Naive thymus-derived CD4-positive, alpha-beta T cell (primary cell): ENCODE measurements at regions of chr20 and their contacts with region 1.

Region 1: GRCh38 chr20:1225783-1226654 is at the start of gene RAD21L1:
- DNase-seq: peak; percentile 55 to 83 (median 66)
- ATAC-seq: peak; percentile 96
- H3K4me3 ChIP-seq: peak within 1 kb of the TSS; percentile 76
- H3K4me3 Mint-ChIP-seq: peak within 1 kb of the TSS; percentile 82 to 92 (median 87)
- H3K27ac ChIP-seq: peak within 1 kb of the TSS; percentile 73
- H3K27ac Mint-ChIP-seq: peak within 1 kb of the TSS in 8 of 9 donors; percentile 34 to 90 (median 81)
- H3K4me1 ChIP-seq: peaks cover 8 to 12% of the 10 kb centered on the region in 2 donors
- H3K4me1 Mint-ChIP-seq: peaks cover 0 to 21% (median 14%) of the 10 kb centered on the region in 7 donors
- H3K27me3 ChIP-seq: peaks cover 0 to 11% of the 10 kb centered on the region in 2 donors
- H3K27me3 Mint-ChIP-seq: peaks cover 0 to 65% (median 16%) of the 10 kb centered on the region in 5 donors
- total RNA-seq, gene RAD21L1: 0.58 to 0.81 (median 0.64) TPM in 3 of 5 experiments, not detected in the others

Region 2: GRCh38 chr20:844473-845225 is 381.4 kb before region 1 on chr20:
- CTCF ChIA-PET with region 1: no interaction called
- POLR2A ChIA-PET with region 1: no interaction called
- intact Hi-C with region 1: loop called (anchors 2 to 5 kb)
- DNase-seq: peak; percentile 55 to 95 (median 83)
- ATAC-seq: peak; percentile 98
- H3K4me3 ChIP-seq: peak overlapping the region; percentile 75
- H3K4me3 Mint-ChIP-seq: peak overlapping the region; percentile 88 to 97 (median 94)
- H3K27ac ChIP-seq: peak overlapping the region; percentile 70
- H3K27ac Mint-ChIP-seq: peak overlapping the region in 8 of 9 donors; percentile 70 to 93 (median 86)
- H3K4me1 ChIP-seq: peaks cover 40 to 45% of the 10 kb centered on the region in 2 donors
- H3K4me1 Mint-ChIP-seq: peaks cover 30 to 58% (median 52%) of the 10 kb centered on the region in 7 donors
- H3K27me3 ChIP-seq: no peaks in the 10 kb centered on the region
- H3K27me3 Mint-ChIP-seq: no peaks in the 10 kb centered on the region

Region 3: DNA sequence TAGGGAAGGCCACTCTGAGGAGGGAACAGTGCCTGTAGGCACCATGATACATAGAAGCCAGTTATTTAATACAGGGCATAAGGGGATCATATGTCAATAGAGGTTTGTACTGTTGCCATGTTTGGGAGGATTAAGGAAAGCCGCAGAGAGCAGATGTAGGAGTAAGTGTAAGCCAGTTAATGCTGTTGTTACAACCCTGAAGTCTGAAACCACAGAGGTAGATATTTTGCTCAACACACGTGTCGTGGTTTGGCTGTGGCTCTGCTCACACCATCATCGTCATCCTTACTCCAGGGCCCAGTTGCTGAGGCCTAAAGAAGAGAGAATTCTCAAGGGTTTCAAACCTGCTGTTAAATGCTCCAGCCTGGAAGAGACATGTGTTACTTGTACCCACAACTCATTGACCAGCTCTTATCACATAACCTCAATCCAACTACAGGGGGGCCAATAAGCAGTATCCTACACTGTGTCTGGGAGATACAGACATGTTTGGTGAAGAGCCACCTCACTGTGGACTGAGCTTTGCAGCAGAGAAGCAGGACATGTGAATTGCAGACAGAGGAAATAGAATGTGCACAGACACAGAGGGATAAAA is 138.6 kb before region 1 on chr20:
- CTCF ChIA-PET with region 1: no interaction called
- POLR2A ChIA-PET with region 1: no interaction called
- intact Hi-C with region 1: no loop called
- DNase-seq: no peak
- ATAC-seq: no peak
- H3K4me3 ChIP-seq: no peak overlapping the region
- H3K4me3 Mint-ChIP-seq: no peak overlapping the region
- H3K27ac ChIP-seq: no peak overlapping the region
- H3K27ac Mint-ChIP-seq: peak overlapping the region in 2 of 9 donors; percentile 5 to 26
- H3K4me1 ChIP-seq: no peaks in the 10 kb centered on the region
- H3K4me1 Mint-ChIP-seq: peaks cover 7 to 25% (median 17%) of the 10 kb centered on the region in 7 donors
- H3K27me3 ChIP-seq: no peaks in the 10 kb centered on the region
- H3K27me3 Mint-ChIP-seq: no peaks in the 10 kb centered on the region

Region 4: DNA sequence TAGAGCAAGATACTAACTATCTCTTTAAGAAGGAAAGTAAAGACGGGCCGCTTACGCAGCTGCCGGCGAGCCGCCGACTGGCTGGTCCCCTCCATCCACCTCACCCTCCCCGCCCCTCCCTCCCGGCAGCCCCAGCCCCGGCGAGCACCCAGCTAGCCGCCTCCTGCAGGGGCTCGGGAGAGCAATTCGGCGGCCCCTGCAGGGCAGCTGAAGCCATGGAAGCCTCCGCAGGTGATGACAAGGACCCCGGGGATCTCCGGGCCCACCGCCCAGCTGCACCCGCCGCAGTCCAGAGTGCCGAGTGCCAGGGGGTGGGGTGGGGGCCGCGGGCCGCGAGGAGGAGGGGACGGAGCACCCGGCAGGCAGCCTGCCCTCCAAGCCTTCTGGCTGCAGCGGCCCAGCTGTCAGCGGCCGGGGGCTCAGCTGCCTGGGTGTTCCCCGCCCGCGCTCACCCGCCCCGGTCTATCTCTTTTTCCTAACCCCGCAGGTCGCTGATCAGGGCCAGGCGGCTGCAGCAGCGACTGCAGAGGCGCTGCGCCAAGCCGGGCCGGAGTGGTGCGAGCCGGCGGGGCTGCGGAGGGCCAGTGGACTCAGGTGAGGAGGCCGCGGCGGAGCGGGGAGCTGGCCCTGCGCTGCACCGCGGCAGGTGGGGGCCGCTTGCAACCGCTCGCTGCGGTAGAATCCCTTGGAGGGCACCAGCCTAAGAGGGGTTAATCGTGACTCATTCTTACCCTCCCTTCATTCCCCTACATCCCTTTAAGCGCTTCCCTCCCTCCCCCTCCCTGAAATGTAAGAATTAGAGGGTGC is 40.4 kb after region 1 on chr20 and contains the start of gene SNPH:
- CTCF ChIA-PET with region 1: no interaction called
- POLR2A ChIA-PET with region 1: interaction called, 8 read pairs
- intact Hi-C with region 1: loop called (anchors 1 to 2 kb)
- DNase-seq: peak; percentile 41 to 79 (median 67)
- ATAC-seq: peak; percentile 93
- H3K4me3 ChIP-seq: peak within 1 kb of the TSS; percentile 66
- H3K4me3 Mint-ChIP-seq: peak within 1 kb of the TSS; percentile 79 to 99 (median 93)
- H3K27ac ChIP-seq: peak within 1 kb of the TSS; percentile 88
- H3K27ac Mint-ChIP-seq: peak within 1 kb of the TSS; percentile 77 to 100 (median 98)
- H3K4me1 ChIP-seq: peaks cover 9 to 54% of the 10 kb centered on the region in 2 donors
- H3K4me1 Mint-ChIP-seq: peaks cover 22 to 87% (median 81%) of the 10 kb centered on the region in 7 donors
- H3K27me3 ChIP-seq: no peaks in the 10 kb centered on the region
- H3K27me3 Mint-ChIP-seq: peaks cover 0 to 5% (median 0%) of the 10 kb centered on the region in 5 donors
- total RNA-seq, gene SNPH: 7.3 to 43.4 (median 22.5) TPM

Region 5: GRCh38 chr20:1313236-1313964 is 87.4 kb after region 1 on chr20:
- CTCF ChIA-PET with region 1: no interaction called
- POLR2A ChIA-PET with region 1: no interaction called
- intact Hi-C with region 1: no loop called
- DNase-seq: peak; percentile 41 to 69 (median 57)
- ATAC-seq: peak; percentile 85
- H3K4me3 ChIP-seq: no peak overlapping the region
- H3K4me3 Mint-ChIP-seq: peak overlapping the region in 2 of 10 donors; percentile 28 to 34
- H3K27ac ChIP-seq: no peak overlapping the region
- H3K27ac Mint-ChIP-seq: peak overlapping the region in 1 of 9 donors; percentile 48
- H3K4me1 ChIP-seq: peaks cover 5 to 7% of the 10 kb centered on the region in 2 donors
- H3K4me1 Mint-ChIP-seq: peaks cover 0 to 16% (median 4%) of the 10 kb centered on the region in 7 donors
- H3K27me3 ChIP-seq: no peaks in the 10 kb centered on the region
- H3K27me3 Mint-ChIP-seq: no peaks in the 10 kb centered on the region

Region 6: GRCh38 chr20:1325173-1326030 is 99.4 kb after region 1 on chr20:
- CTCF ChIA-PET with region 1: no interaction called
- POLR2A ChIA-PET with region 1: no interaction called
- intact Hi-C with region 1: loop called in 1 of 2 experiments (anchors 1 kb)
- DNase-seq: peak; percentile 96 to 99 (median 98)
- ATAC-seq: peak; percentile 92
- H3K4me3 ChIP-seq: peak overlapping the region; percentile 95
- H3K4me3 Mint-ChIP-seq: no peak overlapping the region
- H3K27ac ChIP-seq: peak overlapping the region; percentile 97
- H3K27ac Mint-ChIP-seq: no peak overlapping the region
- H3K4me1 ChIP-seq: peaks cover 18 to 25% of the 10 kb centered on the region in 2 donors
- H3K4me1 Mint-ChIP-seq: peaks cover 0 to 31% (median 14%) of the 10 kb centered on the region in 7 donors
- H3K27me3 ChIP-seq: no peaks in the 10 kb centered on the region
- H3K27me3 Mint-ChIP-seq: no peaks in the 10 kb centered on the region

Region 7: DNA sequence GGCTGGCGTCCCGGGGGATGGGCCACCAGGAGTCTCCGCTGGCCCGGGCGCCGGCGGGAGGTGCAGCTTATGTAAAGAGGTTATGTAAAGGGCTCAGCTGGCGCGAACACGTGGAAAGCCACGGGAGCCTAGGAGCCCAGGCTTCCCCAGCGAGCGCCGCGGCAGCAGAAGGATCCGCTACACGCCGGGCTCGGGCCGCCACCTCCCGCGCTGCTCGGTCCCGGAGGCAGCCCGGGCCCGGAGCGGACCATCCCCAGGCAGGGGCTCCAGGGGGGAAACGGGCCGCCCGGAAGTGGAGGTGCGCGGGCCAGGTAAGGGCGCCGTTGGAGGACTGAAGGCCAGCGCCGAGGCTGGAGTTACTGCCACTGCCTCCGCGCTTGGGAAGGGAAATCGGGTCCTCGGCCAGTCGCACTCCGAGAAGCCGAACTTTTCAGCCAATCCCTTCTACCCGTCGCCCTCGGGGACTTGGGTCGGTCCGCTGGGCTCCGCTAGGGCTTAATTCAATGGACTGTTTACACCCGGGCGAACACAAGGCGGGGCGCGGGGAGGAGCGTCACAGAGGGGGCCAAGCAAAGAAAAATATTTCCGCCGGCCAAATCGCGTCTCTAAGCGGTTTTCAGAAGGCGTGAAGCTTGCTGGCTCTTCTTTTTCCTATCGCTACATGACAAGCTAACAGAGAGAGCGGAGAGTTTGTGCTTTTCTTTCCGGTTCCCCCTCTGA is 876.0 kb after region 1 on chr20:
- CTCF ChIA-PET with region 1: no interaction called
- POLR2A ChIA-PET with region 1: no interaction called
- intact Hi-C with region 1: loop called in 1 of 2 experiments (anchors 10 kb)
- DNase-seq: peak; percentile 82 to 94 (median 92)
- ATAC-seq: peak; percentile 88
- H3K4me3 ChIP-seq: peak overlapping the region; percentile 88
- H3K4me3 Mint-ChIP-seq: peak overlapping the region; percentile 90 to 97 (median 96)
- H3K27ac ChIP-seq: peak overlapping the region; percentile 96
- H3K27ac Mint-ChIP-seq: peak overlapping the region; percentile 99 to 100 (median 100)
- H3K4me1 ChIP-seq: peaks cover 29 to 38% of the 10 kb centered on the region in 2 donors
- H3K4me1 Mint-ChIP-seq: peaks cover 36 to 58% (median 44%) of the 10 kb centered on the region in 7 donors
- H3K27me3 ChIP-seq: no peaks in the 10 kb centered on the region
- H3K27me3 Mint-ChIP-seq: peaks cover 0 to 4% (median 0%) of the 10 kb centered on the region in 5 donors